ENCODE measurements at regions of chr1 and their contacts with region 1.

Region 1: GRCh38 chr1:81760477-81761097 is 40.1 kb upstream of the ADGRL2 start:
- DNase-seq: no peak
- ATAC-seq: 0 out of 3 replicates have a peak, but pooled peaks have one; percentile 35
- H3K4me3 ChIP-seq: no peak overlapping the region
- H3K27ac ChIP-seq: no peak overlapping the region
- H3K4me1 ChIP-seq: no peaks in the 10 kb centered on the region
- H3K27me3 ChIP-seq: no peaks in the 10 kb centered on the region
- CTCF ChIP-seq: peak; percentile 18 to 48 (median 23); a peak in 4 of 6 replicates
- EP300 ChIP-seq: no peak
- POLR2A ChIP-seq: no peak
- RAD21 ChIP-seq: peak; percentile 41

Region 2: GRCh38 chr1:81414488-81415015 is 346.0 kb before region 1 on chr1:
- CTCF ChIA-PET with region 1: interaction called, 9 read pairs
- POLR2A ChIA-PET with region 1: no interaction called
- RAD21 ChIA-PET with region 1: interaction called, 8 read pairs
- SMC1A ChIA-PET with region 1: interaction called, 13 read pairs
- in situ Hi-C with region 1: no loop called
- intact Hi-C with region 1: loop called (anchors 1 kb)
- DNase-seq: peak; percentile 9
- ATAC-seq: peak; percentile 98
- H3K4me3 ChIP-seq: no peak overlapping the region
- H3K27ac ChIP-seq: no peak overlapping the region
- H3K4me1 ChIP-seq: no peaks in the 10 kb centered on the region
- H3K27me3 ChIP-seq: no peaks in the 10 kb centered on the region; a peak in 1 of 4 replicates
- CTCF ChIP-seq: peak; percentile 77 to 91 (median 85)
- EP300 ChIP-seq: no peak
- POLR2A ChIP-seq: no peak
- RAD21 ChIP-seq: peak; percentile 80

Region 3: DNA sequence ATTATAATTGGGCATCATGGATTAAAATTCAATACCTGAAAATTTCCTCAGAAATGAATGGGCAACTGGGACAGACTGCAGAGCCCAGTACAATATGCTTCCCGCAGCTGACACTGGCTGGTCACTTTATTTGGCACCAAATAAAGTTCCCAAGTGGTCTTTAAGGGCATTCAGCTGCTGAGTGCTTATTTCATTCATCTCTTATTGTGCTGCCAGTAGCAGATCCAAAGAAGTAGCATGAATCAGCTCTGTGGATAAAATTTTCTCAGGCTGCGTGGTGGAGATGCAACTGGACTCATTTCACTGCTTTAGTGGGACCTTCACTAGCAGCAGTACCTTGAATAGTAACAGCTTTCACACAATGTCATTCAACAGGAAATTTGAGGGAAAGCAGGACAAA is 186.2 kb before region 1 on chr1:
- CTCF ChIA-PET with region 1: interaction called, 10 read pairs
- POLR2A ChIA-PET with region 1: no interaction called
- RAD21 ChIA-PET with region 1: interaction called, 10 read pairs
- SMC1A ChIA-PET with region 1: interaction called, 6 read pairs
- in situ Hi-C with region 1: no loop called
- intact Hi-C with region 1: no loop called
- DNase-seq: no peak
- ATAC-seq: no peak
- H3K4me3 ChIP-seq: no peak overlapping the region
- H3K27ac ChIP-seq: no peak overlapping the region
- H3K4me1 ChIP-seq: no peaks in the 10 kb centered on the region
- H3K27me3 ChIP-seq: peaks cover 0 to 3% of the 10 kb centered on the region in 2 experiments; a peak in 1 of 4 replicates
- CTCF ChIP-seq: no peak
- EP300 ChIP-seq: no peak
- POLR2A ChIP-seq: no peak
- RAD21 ChIP-seq: no peak

Region 4: DNA sequence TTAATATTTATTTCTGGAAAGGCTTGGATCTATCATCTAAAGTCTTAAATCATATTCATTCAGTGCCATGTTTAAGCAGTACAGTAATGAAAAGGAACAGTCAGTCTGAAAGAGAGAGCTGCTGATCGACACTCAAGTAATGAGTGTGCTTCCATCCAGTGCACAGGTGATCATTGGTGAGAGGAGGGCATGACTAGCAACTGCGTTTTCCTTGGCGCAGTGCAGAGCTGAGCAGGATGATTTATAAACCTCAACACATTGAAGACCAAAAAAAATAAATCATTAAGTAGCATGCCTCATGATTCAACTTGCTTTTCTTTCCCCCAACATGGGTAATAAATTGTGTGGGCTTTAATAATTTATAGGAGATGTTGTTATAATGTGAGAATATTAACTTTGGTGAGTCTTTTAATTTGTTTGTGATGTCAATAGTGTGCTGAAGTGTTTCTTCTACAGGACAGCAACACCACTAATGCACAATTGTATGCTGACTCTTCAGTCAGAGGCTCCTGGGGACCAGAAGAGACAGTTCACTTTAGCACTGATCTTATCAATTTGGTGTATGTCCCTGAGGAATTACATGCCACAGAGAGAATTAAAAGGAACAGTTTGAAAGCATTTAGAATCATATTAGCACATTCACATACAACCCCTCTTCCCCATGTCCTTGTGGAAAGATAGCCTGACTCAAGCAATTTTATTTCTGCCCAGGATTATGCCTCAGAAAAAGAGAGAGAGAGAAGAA is 159.5 kb before region 1 on chr1:
- CTCF ChIA-PET with region 1: interaction called, 12 read pairs
- POLR2A ChIA-PET with region 1: no interaction called
- RAD21 ChIA-PET with region 1: interaction called, 21 read pairs
- SMC1A ChIA-PET with region 1: interaction called, 26 read pairs
- in situ Hi-C with region 1: no loop called
- intact Hi-C with region 1: no loop called
- DNase-seq: no peak
- ATAC-seq: peak; percentile 71
- H3K4me3 ChIP-seq: no peak overlapping the region
- H3K27ac ChIP-seq: no peak overlapping the region; the same call in 1 of the 2 replicates
- H3K4me1 ChIP-seq: peaks cover 9% of the 10 kb centered on the region
- H3K27me3 ChIP-seq: no peaks in the 10 kb centered on the region
- CTCF ChIP-seq: no peak
- EP300 ChIP-seq: peak; percentile 42 to 72; a peak in 2 of 4 replicates
- POLR2A ChIP-seq: no peak
- RAD21 ChIP-seq: no peak

Region 5: DNA sequence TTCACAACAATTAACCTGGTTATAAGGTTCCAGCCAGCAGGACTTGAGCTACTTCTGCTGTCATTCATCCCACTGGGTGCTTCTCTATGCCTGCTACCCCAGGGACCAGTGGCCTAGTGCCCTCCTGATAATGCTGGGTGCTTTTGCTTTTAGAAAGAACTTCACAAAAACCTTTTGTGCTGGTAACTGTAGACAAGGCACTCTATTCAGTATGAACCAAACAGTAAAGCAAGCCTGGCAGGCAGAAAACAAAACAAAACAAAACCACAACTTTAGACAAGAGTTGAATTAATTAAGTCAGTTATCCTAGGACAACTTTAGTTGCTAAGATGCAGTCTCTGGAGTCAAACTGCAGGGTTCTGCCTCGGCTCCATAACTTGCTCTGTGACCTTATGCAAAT is 21.7 kb before region 1 on chr1:
- CTCF ChIA-PET with region 1: interaction called, 12 read pairs
- POLR2A ChIA-PET with region 1: no interaction called
- RAD21 ChIA-PET with region 1: interaction called, 3 read pairs
- SMC1A ChIA-PET with region 1: interaction called, 5 read pairs
- in situ Hi-C with region 1: no loop called
- intact Hi-C with region 1: no loop called
- DNase-seq: no peak
- ATAC-seq: peak; percentile 31
- H3K4me3 ChIP-seq: no peak overlapping the region
- H3K27ac ChIP-seq: no peak overlapping the region
- H3K4me1 ChIP-seq: no peaks in the 10 kb centered on the region
- H3K27me3 ChIP-seq: no peaks in the 10 kb centered on the region
- CTCF ChIP-seq: no peak
- EP300 ChIP-seq: no peak
- POLR2A ChIP-seq: no peak
- RAD21 ChIP-seq: no peak